ENCODE measurements at regions of chr1 and their contacts with region 1.

Region 1: GRCh38 chr1:25616095-25616986 is at the start of gene MAN1C1:
- DNase-seq: peak; percentile 94
- ATAC-seq: peak; percentile 93
- total RNA-seq, gene MAN1C1: 19.5 TPM

Region 2: GRCh38 chr1:25442178-25442577 is 174.2 kb before region 1 on chr1:
- intact Hi-C with region 1: no loop called
- DNase-seq: no peak
- ATAC-seq: no peak

Region 3: GRCh38 chr1:25549273-25550154 is 66.8 kb before region 1 on chr1:
- intact Hi-C with region 1: loop called (anchors 5 kb)
- DNase-seq: no peak
- ATAC-seq: peak; percentile 43

Region 4: DNA sequence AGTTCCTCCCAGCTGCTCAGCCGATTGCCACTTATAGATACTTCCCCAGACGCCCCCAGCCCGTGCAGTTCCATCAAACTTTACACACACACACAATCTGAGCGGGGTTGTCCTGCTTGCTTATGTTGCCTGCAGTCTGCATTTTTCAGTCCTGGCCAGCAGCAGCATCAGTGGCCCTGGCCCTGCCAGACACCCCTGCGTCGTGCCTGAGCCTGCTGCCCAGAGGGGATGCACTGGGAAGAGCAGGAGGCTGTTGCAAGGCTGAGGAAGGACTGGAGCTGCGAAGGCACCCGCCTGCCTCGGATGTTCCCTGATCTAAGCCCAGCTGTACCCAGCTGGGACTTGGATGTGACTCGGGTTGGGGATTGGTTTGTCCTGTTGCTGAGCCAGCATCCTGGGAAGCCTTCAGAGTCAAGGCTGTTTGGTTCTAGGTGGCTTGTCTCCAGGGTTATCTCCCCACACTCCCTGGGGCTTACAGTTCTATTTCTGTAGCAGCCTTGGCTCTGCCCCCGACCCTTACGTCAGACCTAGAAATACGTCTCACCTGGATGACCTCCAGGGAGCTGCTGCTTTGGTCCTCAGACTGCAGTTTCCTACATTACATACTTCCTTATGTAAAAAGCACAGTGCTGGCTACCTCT is 42.6 kb after region 1 on chr1:
- intact Hi-C with region 1: loop called (anchors 2 kb)
- DNase-seq: peak; percentile 81
- ATAC-seq: peak; percentile 92

Region 5: DNA sequence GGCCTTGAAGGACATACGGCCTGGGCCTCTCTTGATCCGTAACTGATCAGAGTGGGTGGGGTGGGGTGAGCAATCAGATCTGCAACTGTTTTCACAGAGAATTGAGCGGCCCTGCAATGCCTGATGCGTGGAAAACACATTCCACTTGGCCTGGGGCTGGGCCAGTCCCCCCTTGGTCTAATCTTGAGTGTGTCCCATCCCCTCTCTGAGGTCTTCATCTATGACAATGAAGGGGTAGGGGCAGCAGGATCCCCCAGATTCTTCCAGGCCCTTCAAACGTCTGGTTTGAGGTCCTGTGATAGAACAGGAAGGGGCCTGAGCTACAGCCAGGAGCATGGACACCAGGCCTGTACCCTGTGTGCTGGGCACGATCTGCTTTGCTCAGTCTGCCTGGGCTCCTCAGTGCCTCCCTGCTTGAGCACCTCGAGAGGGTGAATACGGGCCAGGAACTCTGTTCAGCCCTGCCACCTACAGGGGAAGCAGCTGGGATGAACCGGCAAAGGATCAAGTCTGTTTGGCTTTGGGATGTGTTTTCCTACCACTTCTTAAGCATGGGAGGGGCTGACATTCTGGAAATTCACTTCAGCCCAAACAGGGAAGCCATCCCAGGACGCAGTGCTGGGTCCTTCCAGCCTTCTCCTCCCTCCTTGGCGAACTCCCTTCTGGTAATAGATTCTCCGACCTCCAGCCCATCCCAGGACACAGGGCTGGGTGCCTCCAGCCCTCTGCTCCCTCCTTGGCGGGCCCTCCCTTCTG is 127.7 kb after region 1 on chr1:
- intact Hi-C with region 1: loop called (anchors 2 kb)
- DNase-seq: peak; percentile 79
- ATAC-seq: peak; percentile 87

Measured in Right ventricle myocardium inferior (tissue), 1 donor.